Astrocyte of the cerebellum (primary cell): ENCODE measurements at regions of chr21 and their contacts with region 1.

Region 1: DNA sequence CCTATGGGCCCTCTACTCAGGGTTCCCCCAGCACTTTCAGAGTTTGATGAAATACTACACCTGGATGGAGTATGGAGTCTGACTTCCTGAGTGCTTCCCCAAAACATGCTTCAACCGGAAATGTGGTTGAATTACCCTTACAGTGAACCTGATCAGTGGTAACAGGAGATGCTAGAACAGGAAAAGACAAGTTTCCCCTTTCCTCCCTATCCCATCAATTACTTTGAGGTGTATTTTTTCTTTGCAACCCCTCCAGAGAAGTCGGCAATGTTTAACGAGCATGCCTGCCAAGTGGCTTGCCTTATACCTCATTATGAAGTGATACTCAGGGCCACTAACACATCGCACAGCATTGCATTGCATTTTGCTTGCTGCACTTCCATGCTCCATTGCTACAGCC is 7.0 kb downstream of the KRTAP15-1 start:
- DNase-seq: no peak
- H3K4me3 ChIP-seq: no peak overlapping the region
- CTCF ChIP-seq: no peak

Region 2: DNA sequence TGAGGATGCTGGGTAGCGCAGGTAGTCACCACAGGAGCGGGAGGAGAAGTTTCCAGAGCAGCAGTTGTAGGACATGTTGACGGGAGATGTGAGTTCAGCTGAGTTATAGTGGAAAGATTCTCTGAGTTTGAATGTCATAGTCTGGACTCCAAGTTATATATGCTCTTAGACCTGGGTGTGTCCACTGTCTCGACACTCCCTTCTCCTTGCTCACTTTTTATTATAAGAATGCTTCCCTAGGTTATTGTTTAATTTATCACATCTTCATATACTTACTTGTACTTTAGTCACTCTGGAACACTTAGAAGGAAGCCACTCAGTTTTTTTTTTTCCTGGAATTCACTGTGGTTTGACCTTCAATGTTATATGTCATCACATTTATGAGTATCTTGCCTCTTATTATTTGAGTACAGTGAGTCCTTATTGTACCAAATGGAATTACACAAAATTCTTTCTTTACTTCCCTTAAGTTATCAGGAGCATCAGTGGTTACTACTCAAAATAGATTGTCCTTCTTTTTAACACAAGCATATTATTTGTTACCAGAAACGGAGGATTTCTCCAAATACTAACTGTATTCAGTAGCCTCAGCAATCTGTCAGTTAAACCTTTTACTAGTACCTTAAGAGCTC is 74.8 kb before region 1 on chr21 and contains the start of gene KRTAP13-2:
- in situ Hi-C with region 1: loop called (anchors 5 kb)
- DNase-seq: no peak
- H3K4me3 ChIP-seq: no peak within 1 kb of the TSS
- CTCF ChIP-seq: no peak